Naive thymus-derived CD8-positive, alpha-beta T cell (primary cell): ENCODE measurements at regions of chr6 and their contacts with region 1.

Region 1: DNA sequence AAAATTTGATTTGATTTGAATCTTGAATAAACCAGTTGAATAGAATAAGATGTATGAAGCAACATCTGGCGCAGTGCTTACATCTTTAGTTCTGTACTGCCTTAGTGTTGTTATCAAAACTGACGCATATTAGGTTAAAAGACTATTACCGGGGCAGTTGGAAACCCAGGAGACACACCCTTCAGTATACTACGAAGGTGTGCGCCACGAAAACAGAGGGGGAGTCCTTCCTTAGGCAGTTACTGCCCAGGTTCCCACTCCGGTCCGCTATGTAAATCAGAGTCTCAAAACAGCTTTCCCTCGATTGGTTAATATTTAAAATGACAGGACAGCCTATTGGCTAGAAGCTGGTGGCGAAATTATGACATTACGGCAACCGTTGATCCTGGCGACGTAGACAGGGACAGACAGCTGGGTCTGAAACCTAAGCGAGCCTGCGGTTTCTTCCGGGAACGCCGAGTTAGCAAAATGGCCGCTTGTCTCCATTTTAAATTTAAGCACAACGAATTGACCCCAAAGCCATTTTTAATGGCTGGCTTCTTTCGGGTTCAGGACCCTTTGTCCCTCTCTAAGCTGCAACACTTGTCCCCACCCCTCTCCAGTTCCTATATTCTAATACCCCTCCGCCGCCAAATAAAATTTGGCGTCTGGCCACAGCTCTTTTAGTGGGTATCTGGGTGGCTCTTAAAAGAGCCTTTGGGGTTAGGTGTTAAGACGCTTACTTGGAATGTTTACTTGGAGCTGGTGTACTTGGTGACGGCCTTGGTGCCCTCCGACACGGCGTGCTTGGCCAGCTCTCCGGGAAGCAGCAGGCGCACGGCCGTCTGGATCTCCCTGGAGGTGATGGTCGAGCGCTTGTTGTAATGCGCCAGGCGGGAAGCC is 35.8 kb downstream of the HFE start:
- DNase-seq: peak; percentile 76 to 99 (median 94)
- ATAC-seq: peak; percentile 59 to 63
- H3K4me3 Mint-ChIP-seq: peak overlapping the region; percentile 93 to 100 (median 98)
- H3K27ac Mint-ChIP-seq: peak overlapping the region; percentile 96 to 100 (median 98)
- H3K4me1 Mint-ChIP-seq: peaks cover 24 to 43% (median 33%) of the 10 kb centered on the region in 4 donors
- H3K27me3 Mint-ChIP-seq: peaks cover 0 to 4% (median 0%) of the 10 kb centered on the region in 5 donors

Region 2: GRCh38 chr6:26045065-26045927 is 77.7 kb before region 1 on chr6:
- POLR2A ChIA-PET with region 1: interaction called, 139 read pairs
- DNase-seq: peak; percentile 45 to 95 (median 86)
- ATAC-seq: peak; percentile 58 to 63
- H3K4me3 Mint-ChIP-seq: peak overlapping the region; percentile 90 to 97 (median 92)
- H3K27ac Mint-ChIP-seq: peak overlapping the region; percentile 90 to 99 (median 96)
- H3K4me1 Mint-ChIP-seq: peaks cover 8 to 28% (median 14%) of the 10 kb centered on the region in 4 donors
- H3K27me3 Mint-ChIP-seq: no peaks in the 10 kb centered on the region

Region 3: GRCh38 chr6:26136321-26136720 is 13.3 kb after region 1 on chr6:
- POLR2A ChIA-PET with region 1: interaction called, 53 read pairs
- DNase-seq: no peak
- ATAC-seq: no peak
- H3K4me3 Mint-ChIP-seq: no peak overlapping the region
- H3K27ac Mint-ChIP-seq: peak overlapping the region in 4 of 10 donors; percentile 18 to 80 (median 68)
- H3K4me1 Mint-ChIP-seq: peaks cover 16 to 40% (median 37%) of the 10 kb centered on the region in 4 donors
- H3K27me3 Mint-ChIP-seq: no peaks in the 10 kb centered on the region

Region 4: DNA sequence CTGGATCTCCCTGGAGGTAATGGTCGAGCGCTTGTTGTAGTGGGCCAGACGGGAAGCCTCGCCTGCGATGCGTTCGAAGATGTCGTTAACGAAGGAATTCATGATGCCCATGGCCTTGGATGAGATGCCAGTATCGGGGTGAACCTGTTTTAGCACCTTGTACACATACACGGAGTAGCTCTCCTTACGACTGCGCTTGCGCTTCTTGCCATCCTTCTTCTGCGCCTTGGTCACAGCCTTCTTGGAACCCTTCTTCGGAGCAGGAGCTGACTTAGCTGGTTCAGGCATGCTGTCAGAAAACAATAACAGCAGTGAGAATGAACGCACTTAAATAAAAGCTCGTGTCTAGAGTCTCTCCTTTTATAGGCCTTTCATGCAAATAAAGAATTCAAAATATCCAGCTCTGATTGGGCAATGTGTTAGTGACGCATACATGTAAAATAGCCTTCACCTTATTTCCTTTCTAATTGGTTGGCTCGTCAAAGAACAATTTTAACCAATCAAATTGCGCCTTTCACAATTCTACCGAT is 93.4 kb after region 1 on chr6:
- POLR2A ChIA-PET with region 1: interaction called, 109 read pairs
- DNase-seq: peak; percentile 34 to 95 (median 86)
- ATAC-seq: peak; percentile 81 to 84
- H3K4me3 Mint-ChIP-seq: no peak overlapping the region
- H3K27ac Mint-ChIP-seq: no peak overlapping the region
- H3K4me1 Mint-ChIP-seq: peaks cover 0 to 12% (median 7%) of the 10 kb centered on the region in 4 donors
- H3K27me3 Mint-ChIP-seq: no peaks in the 10 kb centered on the region

Region 5: GRCh38 chr6:26270903-26271667 is 148.1 kb after region 1 on chr6:
- POLR2A ChIA-PET with region 1: interaction called, 80 read pairs
- DNase-seq: peak; percentile 52 to 93 (median 81)
- ATAC-seq: peak; percentile 18 to 39
- H3K4me3 Mint-ChIP-seq: no peak overlapping the region
- H3K27ac Mint-ChIP-seq: peak overlapping the region in 4 of 10 donors; percentile 20 to 97 (median 40)
- H3K4me1 Mint-ChIP-seq: peaks cover 4 to 28% (median 11%) of the 10 kb centered on the region in 4 donors
- H3K27me3 Mint-ChIP-seq: no peaks in the 10 kb centered on the region

Region 6: GRCh38 chr6:27838058-27838944 is 1715.3 kb after region 1 on chr6:
- POLR2A ChIA-PET with region 1: interaction called, 52 read pairs
- DNase-seq: peak; percentile 63 to 95 (median 88)
- ATAC-seq: peak; percentile 78 to 81
- H3K4me3 Mint-ChIP-seq: no peak overlapping the region
- H3K27ac Mint-ChIP-seq: no peak overlapping the region
- H3K4me1 Mint-ChIP-seq: peaks cover 8 to 36% (median 18%) of the 10 kb centered on the region in 4 donors
- H3K27me3 Mint-ChIP-seq: peaks cover 0 to 8% (median 0%) of the 10 kb centered on the region in 5 donors